Activated B cell treated with CpG ODN at 0.5 μM for 24 hours (primary cell): ENCODE measurements at regions of chr7 and their contacts with region 1.

Region 1: DNA sequence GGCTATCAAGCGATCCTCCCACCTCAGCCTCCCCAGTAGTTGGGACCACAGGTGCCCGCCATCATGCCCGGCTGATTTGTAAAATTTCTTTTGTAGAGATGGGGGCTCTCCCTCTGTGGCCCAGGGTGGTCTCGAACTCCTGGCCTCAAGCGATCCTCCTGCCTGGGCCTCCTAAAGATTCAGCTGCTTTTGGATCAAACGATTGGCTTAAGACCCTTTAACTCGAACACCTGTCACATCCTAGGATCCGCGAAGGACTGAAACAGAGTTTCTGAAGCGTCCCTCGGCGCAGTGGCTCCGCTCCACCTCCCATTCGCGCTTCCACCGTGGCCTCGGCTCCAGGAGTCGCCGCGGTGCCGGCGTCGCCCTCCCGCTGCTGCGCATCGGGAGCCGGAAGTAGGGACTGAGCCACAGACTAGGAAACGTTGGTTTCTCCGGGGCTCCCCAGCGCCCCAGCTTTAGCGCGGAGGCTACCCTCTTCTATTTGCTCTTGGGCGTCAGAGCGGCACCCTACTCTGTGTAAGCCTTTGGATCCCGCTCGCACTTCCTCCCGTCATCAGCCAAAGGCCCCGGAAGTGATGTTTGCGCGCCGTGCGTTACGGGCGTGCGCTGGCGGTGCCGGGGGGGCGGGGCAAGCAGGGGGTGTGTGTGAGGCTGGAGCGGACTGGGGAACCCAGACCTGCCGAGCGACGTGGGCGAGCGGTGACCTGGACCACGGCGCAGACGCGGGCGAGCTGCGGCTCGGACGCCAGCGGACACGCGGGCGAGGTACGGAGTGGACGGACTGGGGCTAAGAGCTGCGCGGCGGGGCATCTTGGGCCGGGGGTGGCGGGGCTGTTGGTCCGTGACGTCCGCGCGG is 53.0 kb downstream of the KCTD7 start:
- DNase-seq: peak; percentile 95
- ATAC-seq: peak; percentile 93
- H3K4me3 Mint-ChIP-seq: peak overlapping the region; percentile 89
- H3K27ac Mint-ChIP-seq: peak overlapping the region; percentile 89
- H3K4me1 Mint-ChIP-seq: peaks cover 48% of the 10 kb centered on the region
- H3K27me3 Mint-ChIP-seq: no peaks in the 10 kb centered on the region
- CTCF ChIP-seq: no peak

Region 2: GRCh38 chr7:66654123-66654732 is 27.5 kb before region 1 on chr7:
- CTCF ChIA-PET with region 1: no interaction called
- POLR2A ChIA-PET with region 1: interaction called, 8 read pairs
- intact Hi-C with region 1: loop called (anchors 1 kb)
- DNase-seq: peak; percentile 97
- ATAC-seq: peak; percentile 91
- H3K4me3 Mint-ChIP-seq: peak overlapping the region; percentile 94
- H3K27ac Mint-ChIP-seq: peak overlapping the region; percentile 96
- H3K4me1 Mint-ChIP-seq: peaks cover 30% of the 10 kb centered on the region
- H3K27me3 Mint-ChIP-seq: no peaks in the 10 kb centered on the region
- CTCF ChIP-seq: no peak

Region 3: DNA sequence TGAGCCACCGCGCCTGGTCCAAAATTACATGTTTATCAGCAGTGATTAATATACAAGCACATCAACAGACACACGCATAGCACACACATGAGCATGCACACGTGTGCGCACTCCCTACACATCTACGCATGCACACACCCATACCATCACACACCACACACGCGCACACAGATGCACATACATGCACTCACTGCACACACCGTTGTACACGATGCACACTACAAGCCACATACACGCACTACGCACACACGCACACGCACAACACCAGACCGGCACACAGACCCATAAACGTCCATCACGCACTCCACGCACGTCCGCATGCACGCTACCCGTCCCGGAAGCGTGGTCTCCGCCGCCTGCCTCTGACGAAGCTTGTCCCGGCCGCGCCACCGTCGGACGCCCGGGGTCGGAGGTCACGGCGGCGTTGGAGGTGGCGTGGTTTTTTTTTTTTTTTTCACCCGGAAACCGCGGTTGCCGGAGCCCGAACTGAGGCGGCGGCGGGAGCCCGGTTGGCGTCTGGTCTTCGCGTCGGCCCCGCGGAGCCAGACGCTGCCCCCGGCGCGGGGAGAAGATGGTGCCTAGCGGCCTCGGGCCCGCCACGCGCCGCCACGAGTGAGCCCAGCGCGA is 239.2 kb after region 1 on chr7 and contains the start of gene TMEM248:
- CTCF ChIA-PET with region 1: no interaction called
- POLR2A ChIA-PET with region 1: no interaction called
- intact Hi-C with region 1: loop called (anchors 2 kb)
- DNase-seq: peak; percentile 94
- ATAC-seq: peak; percentile 90
- H3K4me3 Mint-ChIP-seq: peak within 1 kb of the TSS; percentile 99
- H3K27ac Mint-ChIP-seq: peak within 1 kb of the TSS; percentile 92
- H3K4me1 Mint-ChIP-seq: peaks cover 34% of the 10 kb centered on the region
- H3K27me3 Mint-ChIP-seq: no peaks in the 10 kb centered on the region
- CTCF ChIP-seq: no peak
- total RNA-seq, gene TMEM248: 89.2 and 95.0 TPM in 2 replicates